ENCODE measurements at regions of chr1 and their contacts with region 1.

Region 1: GRCh38 chr1:95233737-95234500 is at the start of gene RWDD3:
- DNase-seq: peak; percentile 92
- H3K4me3 Mint-ChIP-seq: peak within 1 kb of the TSS; percentile 90
- H3K27ac Mint-ChIP-seq: peak within 1 kb of the TSS; percentile 84
- H3K4me1 Mint-ChIP-seq: peaks cover 40% of the 10 kb centered on the region
- H3K27me3 Mint-ChIP-seq: peaks cover 5% of the 10 kb centered on the region
- total RNA-seq, gene RWDD3: 11.4 to 12.4 TPM

Region 2: DNA sequence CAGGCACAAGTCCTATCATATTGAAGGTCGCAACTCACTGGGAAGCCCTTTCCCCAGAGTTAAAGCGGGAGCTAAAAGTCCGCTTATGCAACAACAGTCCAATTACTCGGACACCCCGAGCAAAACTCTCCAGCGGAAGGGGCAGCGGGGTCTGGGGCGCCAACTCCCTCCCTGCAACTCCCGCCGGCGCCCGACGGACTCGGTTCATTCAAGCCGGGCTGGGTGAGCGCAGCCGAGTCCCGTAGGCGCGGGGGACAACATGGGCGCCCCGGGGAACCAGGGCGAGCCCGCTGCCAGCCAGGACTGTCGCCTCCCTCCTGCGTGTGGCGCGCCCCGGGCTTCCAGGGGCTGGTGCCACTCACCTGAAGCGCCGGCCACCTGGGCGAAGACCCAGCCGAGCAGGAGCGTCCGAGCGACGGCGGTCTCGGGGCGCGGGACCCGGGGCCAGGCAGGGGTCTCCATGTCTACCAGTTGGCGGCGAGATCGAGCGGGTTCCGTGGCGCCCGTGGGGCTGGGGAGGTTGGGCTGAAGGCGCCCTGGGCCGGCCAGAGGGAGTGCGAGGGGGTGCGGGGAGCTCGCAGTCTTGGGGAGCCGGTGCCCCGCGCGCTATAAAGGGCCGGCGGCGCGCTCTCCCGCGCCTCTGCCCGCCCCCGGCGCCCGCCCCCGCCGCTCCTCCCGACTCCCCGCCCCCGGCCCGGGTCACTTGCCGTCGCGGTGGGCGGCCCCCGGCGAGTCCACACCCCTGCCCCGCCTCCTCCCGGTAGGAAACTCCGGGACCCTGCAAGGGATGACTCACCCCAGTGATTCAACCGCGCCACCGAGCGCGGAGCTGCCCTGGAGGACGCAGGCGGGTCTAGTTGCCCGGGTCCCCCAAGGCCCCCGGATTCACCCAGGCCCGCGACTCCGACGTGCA is 692.5 kb before region 1 on chr1 and contains the start of gene F3:
- CTCF ChIA-PET with region 1: no interaction called
- intact Hi-C with region 1: loop called (anchors 2 kb)
- DNase-seq: peak; percentile 89
- H3K4me3 Mint-ChIP-seq: peak within 1 kb of the TSS; percentile 72
- H3K27ac Mint-ChIP-seq: no peak within 1 kb of the TSS
- H3K4me1 Mint-ChIP-seq: peaks cover 14% of the 10 kb centered on the region
- H3K27me3 Mint-ChIP-seq: peaks cover 63% of the 10 kb centered on the region
- total RNA-seq, gene F3: 0.10 TPM in 1 of 2 experiments, not detected in the other

Region 3: DNA sequence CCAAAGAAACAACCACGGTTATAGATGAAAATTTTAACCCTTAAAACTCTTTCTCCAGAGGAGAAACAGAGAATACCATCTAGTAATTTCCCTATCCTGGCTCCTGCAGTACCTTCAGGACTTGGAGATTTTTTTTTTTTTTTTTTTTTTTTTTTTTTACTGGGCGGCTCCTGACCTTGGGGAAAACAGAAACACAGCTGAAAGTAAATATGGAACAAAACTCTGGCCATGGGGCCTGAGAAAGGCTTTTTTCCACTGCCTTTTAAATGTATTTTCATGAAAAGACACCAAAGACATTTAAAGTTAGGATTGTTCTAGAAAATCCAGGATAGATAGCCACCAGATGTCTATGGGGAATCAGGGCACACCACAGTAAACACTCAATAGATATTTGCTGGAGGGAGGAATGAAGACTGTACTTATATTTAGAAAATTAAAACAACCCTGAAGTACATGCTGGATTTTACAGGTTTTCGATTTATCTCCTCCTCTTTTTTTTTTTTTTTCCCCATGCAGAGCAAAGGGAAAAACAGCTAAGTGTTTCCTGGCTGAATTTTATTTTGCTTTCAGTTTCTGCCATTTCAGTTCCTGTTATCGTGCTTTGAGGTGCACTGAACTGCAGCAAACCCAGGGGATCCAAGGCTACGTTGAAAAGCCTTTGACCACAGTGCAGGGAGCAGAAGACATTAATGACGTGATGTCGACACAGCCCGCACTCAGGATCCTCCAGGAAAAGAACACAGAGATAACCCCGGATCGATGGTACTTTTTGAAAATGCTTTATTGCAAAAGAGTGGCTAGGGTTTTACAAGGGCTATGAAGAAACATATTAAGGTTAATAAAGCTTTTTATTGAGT is 271.3 kb before region 1 on chr1:
- CTCF ChIA-PET with region 1: no interaction called
- intact Hi-C with region 1: loop called (anchors 2 kb)
- DNase-seq: peak; percentile 48
- H3K4me3 Mint-ChIP-seq: peak overlapping the region; percentile 84
- H3K27ac Mint-ChIP-seq: peak overlapping the region; percentile 84
- H3K4me1 Mint-ChIP-seq: peaks cover 8% of the 10 kb centered on the region
- H3K27me3 Mint-ChIP-seq: no peaks in the 10 kb centered on the region

Region 4: GRCh38 chr1:95084317-95085176 is 149.4 kb before region 1 on chr1:
- CTCF ChIA-PET with region 1: interaction called, 18 read pairs
- intact Hi-C with region 1: loop called (anchors 1 kb)
- DNase-seq: peak; percentile 38
- H3K4me3 Mint-ChIP-seq: no peak overlapping the region
- H3K27ac Mint-ChIP-seq: no peak overlapping the region
- H3K4me1 Mint-ChIP-seq: no peaks in the 10 kb centered on the region
- H3K27me3 Mint-ChIP-seq: no peaks in the 10 kb centered on the region

Region 5: GRCh38 chr1:95207223-95207935 is 26.5 kb before region 1 on chr1:
- CTCF ChIA-PET with region 1: no interaction called
- intact Hi-C with region 1: no loop called
- DNase-seq: no peak
- H3K4me3 Mint-ChIP-seq: no peak overlapping the region
- H3K27ac Mint-ChIP-seq: no peak overlapping the region
- H3K4me1 Mint-ChIP-seq: no peaks in the 10 kb centered on the region
- H3K27me3 Mint-ChIP-seq: peaks cover 6% of the 10 kb centered on the region

Region 6: GRCh38 chr1:95247607-95248006 is 13.7 kb after region 1 on chr1:
- CTCF ChIA-PET with region 1: interaction called, 10 read pairs
- intact Hi-C with region 1: no loop called
- DNase-seq: no peak
- H3K4me3 Mint-ChIP-seq: no peak overlapping the region
- H3K27ac Mint-ChIP-seq: no peak overlapping the region
- H3K4me1 Mint-ChIP-seq: peaks cover 13% of the 10 kb centered on the region
- H3K27me3 Mint-ChIP-seq: no peaks in the 10 kb centered on the region